ENCODE measurements at regions of chr20 and their contacts with region 1.

Region 1: GRCh38 chr20:3051385-3052019 is 5.7 kb downstream of the MRPS26 start:
- DNase-seq: no peak
- H3K4me3 Mint-ChIP-seq: no peak overlapping the region
- H3K27ac Mint-ChIP-seq: no peak overlapping the region
- H3K4me1 Mint-ChIP-seq: peaks cover 7% of the 10 kb centered on the region
- H3K27me3 Mint-ChIP-seq: no peaks in the 10 kb centered on the region
- CTCF ChIP-seq: no peak

Region 2: DNA sequence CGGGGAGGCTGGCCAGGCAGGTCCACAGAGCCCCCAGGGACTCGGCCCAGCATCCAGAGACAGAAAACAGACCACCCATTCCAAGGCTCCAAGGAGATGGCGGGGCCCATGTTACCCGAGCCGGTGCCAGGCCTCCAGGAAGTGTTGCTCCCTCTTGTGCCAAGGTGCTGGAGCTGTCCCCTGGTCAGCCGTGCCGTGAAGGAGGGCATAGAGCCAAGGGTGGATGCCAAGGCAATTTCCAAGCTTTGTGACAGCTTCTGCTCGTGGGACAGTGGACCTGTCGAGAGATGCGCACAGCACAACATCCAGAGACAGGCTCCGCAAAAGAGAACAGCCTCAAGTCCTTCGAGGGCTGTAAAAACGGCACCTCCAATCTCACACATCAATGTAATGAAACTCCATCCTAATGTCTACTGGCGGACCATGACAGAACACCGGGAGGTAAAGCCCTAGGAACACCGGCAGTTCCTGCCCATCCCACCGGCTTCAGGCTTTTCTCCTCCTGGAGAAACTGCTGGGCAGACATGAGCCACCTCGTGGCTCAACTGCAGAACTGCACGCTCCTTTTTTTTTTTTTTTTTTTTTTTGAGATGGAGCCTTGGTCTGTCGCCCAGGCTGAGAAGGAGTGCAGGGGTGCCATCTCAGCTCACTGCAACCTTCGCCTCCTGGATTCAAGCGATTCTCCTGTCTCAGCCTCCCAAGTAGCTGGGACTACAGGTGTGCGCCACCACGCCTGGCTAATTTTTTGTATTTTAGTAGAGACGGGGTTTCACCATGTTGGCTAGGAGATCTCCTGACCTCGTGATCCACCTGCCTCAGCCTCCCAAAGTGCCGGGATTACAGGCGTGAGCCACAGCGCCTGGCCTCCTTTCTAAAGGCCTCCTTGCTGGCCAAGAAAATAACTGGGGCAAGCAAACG is 63.9 kb after region 1 on chr20:
- CTCF ChIA-PET with region 1: no interaction called
- intact Hi-C with region 1: loop called (anchors 5 kb)
- DNase-seq: peak; percentile 24
- H3K4me3 Mint-ChIP-seq: no peak overlapping the region
- H3K27ac Mint-ChIP-seq: no peak overlapping the region
- H3K4me1 Mint-ChIP-seq: no peaks in the 10 kb centered on the region
- H3K27me3 Mint-ChIP-seq: no peaks in the 10 kb centered on the region
- CTCF ChIP-seq: no peak

Region 3: GRCh38 chr20:3323398-3323797 is 271.9 kb after region 1 on chr20:
- CTCF ChIA-PET with region 1: no interaction called
- intact Hi-C with region 1: no loop called
- DNase-seq: peak; percentile 1
- H3K4me3 Mint-ChIP-seq: no peak overlapping the region
- H3K27ac Mint-ChIP-seq: no peak overlapping the region
- H3K4me1 Mint-ChIP-seq: no peaks in the 10 kb centered on the region
- H3K27me3 Mint-ChIP-seq: no peaks in the 10 kb centered on the region
- CTCF ChIP-seq: no peak